CD8-positive, alpha-beta T cell (primary cell): ENCODE measurements at regions of chr7 and their contacts with region 1.

Region 1: DNA sequence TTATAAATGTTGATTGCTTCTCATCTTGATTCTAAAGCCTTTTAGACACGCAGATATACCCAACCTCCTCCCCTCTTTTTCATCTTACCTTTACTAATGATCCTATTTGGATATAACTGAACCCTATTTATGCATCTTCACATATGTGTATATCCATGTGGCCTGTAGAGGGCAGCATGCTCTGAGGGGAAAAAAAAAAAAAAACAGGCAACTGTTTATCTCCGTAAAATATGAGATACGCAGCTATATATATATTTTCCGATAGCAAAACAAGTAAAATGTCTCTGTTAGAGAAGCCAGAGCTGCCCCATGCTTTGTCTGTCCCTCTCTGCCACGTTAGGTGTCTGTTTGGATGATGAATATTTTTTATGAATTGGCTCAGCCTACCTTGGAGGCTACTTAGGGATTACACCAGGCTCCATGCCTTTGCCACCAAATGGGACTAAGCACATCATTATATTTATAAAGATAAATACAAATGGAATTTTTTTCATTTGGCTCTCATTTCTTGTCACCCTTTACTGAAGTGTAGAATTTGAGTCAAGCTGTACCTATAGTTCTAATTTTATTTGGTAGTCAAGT is 174.8 kb upstream of the FZD1 start:
- DNase-seq: peak in 2 of 9 experiments; percentile 22 to 49
- ATAC-seq: no peak
- H3K4me3 ChIP-seq: no peak overlapping the region
- H3K4me3 Mint-ChIP-seq: no peak overlapping the region
- H3K27ac ChIP-seq: no peak overlapping the region
- H3K27ac Mint-ChIP-seq: no peak overlapping the region
- H3K4me1 ChIP-seq: peaks cover 18% of the 10 kb centered on the region
- H3K4me1 Mint-ChIP-seq: peaks cover 17% of the 10 kb centered on the region
- H3K27me3 ChIP-seq: no peaks in the 10 kb centered on the region
- H3K27me3 Mint-ChIP-seq: no peaks in the 10 kb centered on the region
- CTCF ChIP-seq: peak; percentile 70

Region 2: GRCh38 chr7:89739786-89740185 is 1349.7 kb before region 1 on chr7:
- CTCF ChIA-PET with region 1: no interaction called
- POLR2A ChIA-PET with region 1: no interaction called
- intact Hi-C with region 1: no loop called
- DNase-seq: no peak
- ATAC-seq: no peak
- H3K4me3 ChIP-seq: no peak overlapping the region
- H3K4me3 Mint-ChIP-seq: no peak overlapping the region
- H3K27ac ChIP-seq: no peak overlapping the region
- H3K27ac Mint-ChIP-seq: no peak overlapping the region
- H3K4me1 ChIP-seq: no peaks in the 10 kb centered on the region
- H3K4me1 Mint-ChIP-seq: no peaks in the 10 kb centered on the region
- H3K27me3 ChIP-seq: no peaks in the 10 kb centered on the region
- H3K27me3 Mint-ChIP-seq: no peaks in the 10 kb centered on the region
- CTCF ChIP-seq: no peak

Region 3: DNA sequence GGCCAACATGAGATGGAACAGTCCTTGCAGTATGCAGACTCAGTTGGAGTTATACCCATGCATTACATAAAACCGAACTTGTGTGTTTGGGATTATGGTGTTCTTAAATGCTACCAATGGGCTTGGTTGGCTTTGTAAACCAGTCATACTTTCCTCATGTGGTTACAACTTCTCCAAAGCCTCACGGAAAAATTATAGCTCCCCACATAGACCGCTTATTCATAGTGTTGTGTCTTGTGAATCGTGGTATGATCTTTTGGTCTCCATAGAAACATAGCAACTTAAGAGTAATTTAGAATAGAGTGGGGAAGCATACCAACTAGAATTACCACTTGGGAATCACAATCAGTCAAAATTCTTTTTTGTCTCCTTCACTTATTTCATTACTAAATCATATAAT is 62.4 kb after region 1 on chr7:
- CTCF ChIA-PET with region 1: no interaction called
- POLR2A ChIA-PET with region 1: no interaction called
- intact Hi-C with region 1: no loop called
- DNase-seq: no peak
- ATAC-seq: no peak
- H3K4me3 ChIP-seq: no peak overlapping the region
- H3K4me3 Mint-ChIP-seq: no peak overlapping the region
- H3K27ac ChIP-seq: no peak overlapping the region
- H3K27ac Mint-ChIP-seq: no peak overlapping the region
- H3K4me1 ChIP-seq: no peaks in the 10 kb centered on the region
- H3K4me1 Mint-ChIP-seq: no peaks in the 10 kb centered on the region
- H3K27me3 ChIP-seq: no peaks in the 10 kb centered on the region
- H3K27me3 Mint-ChIP-seq: no peaks in the 10 kb centered on the region
- CTCF ChIP-seq: no peak

Region 4: DNA sequence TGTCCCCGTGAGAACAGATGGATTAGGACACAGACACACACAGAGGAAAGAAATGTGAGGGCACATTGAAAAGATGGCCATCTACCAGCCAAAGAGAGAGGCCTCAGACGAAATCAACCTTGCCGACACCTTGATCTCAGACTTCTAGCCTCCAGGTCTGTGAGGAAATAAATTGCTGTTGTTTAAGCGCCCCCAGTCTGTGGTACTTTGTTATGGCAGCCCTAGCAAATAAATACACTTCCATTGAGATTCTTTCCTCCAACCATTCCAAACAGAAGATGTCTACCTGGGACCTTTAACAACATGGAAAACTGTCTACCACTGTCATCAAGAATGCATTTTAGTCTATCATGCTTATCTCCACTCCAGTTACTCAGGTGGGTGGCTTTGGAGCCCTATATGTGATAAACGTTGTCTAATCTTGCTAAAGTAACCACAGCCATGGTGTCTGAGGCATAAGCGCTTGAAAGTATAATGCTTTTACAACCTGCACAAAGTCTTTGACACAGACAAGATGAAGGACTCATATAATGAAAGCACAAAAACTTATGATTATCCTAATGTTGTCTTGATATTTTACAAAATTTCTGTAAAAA is 546.8 kb after region 1 on chr7:
- CTCF ChIA-PET with region 1: no interaction called
- POLR2A ChIA-PET with region 1: no interaction called
- intact Hi-C with region 1: loop called in 1 of 2 experiments (anchors 10 kb)
- DNase-seq: no peak
- ATAC-seq: no peak
- H3K4me3 ChIP-seq: no peak overlapping the region
- H3K4me3 Mint-ChIP-seq: no peak overlapping the region
- H3K27ac ChIP-seq: no peak overlapping the region
- H3K27ac Mint-ChIP-seq: no peak overlapping the region
- H3K4me1 ChIP-seq: no peaks in the 10 kb centered on the region
- H3K4me1 Mint-ChIP-seq: no peaks in the 10 kb centered on the region
- H3K27me3 ChIP-seq: no peaks in the 10 kb centered on the region
- H3K27me3 Mint-ChIP-seq: no peaks in the 10 kb centered on the region
- CTCF ChIP-seq: no peak